Activated CD4-positive, alpha-beta T cell treated with anti-CD3 and anti-CD28 coated beads for 36 hours (primary cell): ENCODE measurements at regions of chr9 and their contacts with region 1.

Region 1: DNA sequence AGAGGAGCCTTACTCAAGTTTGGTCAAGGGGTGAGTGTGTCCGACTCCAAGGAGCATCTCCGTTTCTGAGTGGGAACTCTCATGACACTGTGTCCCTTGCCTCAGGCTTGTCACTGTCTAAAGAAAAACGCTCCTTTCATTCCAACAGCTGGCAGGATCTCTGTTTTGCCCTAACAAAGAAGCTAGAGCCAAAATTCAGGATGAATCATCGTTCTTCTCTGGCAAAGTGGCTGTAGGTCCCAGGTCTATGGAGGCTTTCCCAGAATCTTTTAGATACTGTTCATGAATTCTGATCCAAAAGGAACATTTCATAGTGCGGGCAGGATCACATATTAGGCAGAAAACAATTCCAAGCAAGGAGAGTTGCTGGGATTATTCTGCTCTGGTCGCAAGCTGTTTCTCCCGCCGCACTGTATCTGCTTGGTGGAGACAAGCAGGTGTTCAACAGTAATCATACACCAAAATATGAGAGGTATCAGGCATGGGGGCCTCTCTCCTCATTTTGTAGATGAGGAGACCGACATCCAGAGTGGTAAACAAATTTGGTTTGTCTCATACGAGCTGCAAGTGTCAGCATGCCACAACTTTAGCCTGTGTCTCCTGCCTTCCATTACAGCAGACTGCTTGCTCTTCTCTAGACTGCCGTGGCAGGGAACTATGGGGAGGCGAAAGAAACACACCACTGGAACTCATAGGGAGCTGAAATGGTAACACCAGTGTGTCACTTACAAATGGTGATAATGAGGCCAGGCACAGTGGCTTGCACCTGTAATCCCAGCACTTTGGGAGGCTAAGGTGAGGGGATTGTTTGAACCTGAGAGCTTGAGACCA is 72.6 kb downstream of the ENTREP1 start:
- DNase-seq: no peak
- ATAC-seq: no peak
- H3K4me3 Mint-ChIP-seq: no peak overlapping the region
- H3K27ac Mint-ChIP-seq: no peak overlapping the region
- H3K4me1 Mint-ChIP-seq: no peaks in the 10 kb centered on the region
- H3K27me3 Mint-ChIP-seq: peaks cover under 1% of the 10 kb centered on the region

Region 2: DNA sequence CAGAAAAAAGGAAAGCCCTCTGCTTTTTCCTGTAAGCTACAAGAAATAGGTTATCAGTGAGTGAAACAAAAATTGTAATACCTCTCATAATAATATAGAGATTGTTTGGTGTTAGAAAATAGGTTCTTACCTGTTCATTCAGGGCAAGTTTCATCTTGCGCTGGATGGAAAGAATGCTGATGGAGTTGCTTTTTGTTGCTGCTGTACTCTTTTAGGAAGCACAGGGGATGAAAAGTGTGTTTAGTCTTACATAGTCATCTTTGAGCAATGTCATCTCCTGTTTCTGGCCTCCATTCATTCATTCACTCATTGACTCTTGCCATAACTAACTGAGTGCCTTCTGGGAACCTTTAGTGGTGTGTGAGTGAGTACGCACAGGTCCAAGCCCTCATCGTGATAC is 66.2 kb before region 1 on chr9:
- CTCF ChIA-PET with region 1: no interaction called
- POLR2A ChIA-PET with region 1: no interaction called
- intact Hi-C with region 1: no loop called
- DNase-seq: no peak
- ATAC-seq: no peak
- H3K4me3 Mint-ChIP-seq: no peak overlapping the region
- H3K27ac Mint-ChIP-seq: no peak overlapping the region
- H3K4me1 Mint-ChIP-seq: no peaks in the 10 kb centered on the region
- H3K27me3 Mint-ChIP-seq: peaks cover 29% of the 10 kb centered on the region

Region 3: GRCh38 chr9:69346998-69347397 is 50.6 kb before region 1 on chr9:
- CTCF ChIA-PET with region 1: no interaction called
- POLR2A ChIA-PET with region 1: no interaction called
- intact Hi-C with region 1: loop called in 1 of 2 experiments (anchors 5 kb)
- DNase-seq: no peak
- ATAC-seq: no peak
- H3K4me3 Mint-ChIP-seq: no peak overlapping the region
- H3K27ac Mint-ChIP-seq: no peak overlapping the region
- H3K4me1 Mint-ChIP-seq: no peaks in the 10 kb centered on the region
- H3K27me3 Mint-ChIP-seq: peaks cover 23% of the 10 kb centered on the region